ENCODE measurements at regions of chr12 and their contacts with region 1.

Region 1: GRCh38 chr12:51871126-51871525 is 16.8 kb upstream of the ANKRD33 start:
- DNase-seq: no peak
- H3K4me3 ChIP-seq: no peak overlapping the region
- CTCF ChIP-seq: no peak

Region 2: DNA sequence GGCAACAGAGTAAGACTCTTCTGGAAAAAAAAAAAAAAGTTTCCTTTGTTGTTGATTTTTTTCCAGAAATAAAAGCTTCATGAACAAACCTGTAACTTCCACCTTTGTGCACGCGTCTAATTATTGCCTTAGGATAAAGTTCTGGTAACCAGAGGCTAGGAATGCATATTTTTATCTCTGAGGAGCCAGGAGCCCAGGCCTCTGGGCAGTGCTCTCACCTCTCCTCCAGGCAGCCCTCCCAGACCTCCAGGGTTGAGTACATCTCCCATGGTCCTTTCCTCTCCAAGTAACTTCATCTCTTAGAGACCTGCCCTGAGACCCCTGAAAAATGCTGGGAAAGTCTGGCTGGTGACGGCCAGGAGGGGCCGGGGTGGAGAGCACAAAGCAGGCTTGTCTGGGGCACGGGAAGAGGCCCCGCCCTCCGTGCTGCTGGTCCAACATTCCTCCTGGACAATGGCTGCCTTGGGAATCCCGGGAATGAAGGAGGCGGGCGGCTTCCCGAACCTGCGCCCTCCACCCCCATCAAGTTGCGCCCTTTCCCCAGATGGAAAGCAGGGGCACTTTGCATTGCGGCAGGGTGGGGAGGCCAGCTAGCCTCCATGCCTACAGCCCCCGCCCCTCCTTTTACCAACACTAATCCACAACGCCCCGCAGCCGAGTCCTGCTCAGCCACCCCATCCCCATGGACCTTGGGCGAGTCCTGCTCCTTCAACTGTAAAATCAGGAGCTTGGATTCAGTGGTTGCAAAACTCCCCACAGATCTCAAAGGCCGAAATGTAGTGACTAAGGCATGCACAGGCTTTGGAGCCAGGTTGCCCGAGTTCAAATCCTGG is 15.3 kb before region 1 on chr12:
- CTCF ChIA-PET with region 1: interaction called, 73 read pairs
- POLR2A ChIA-PET with region 1: no interaction called
- DNase-seq: no peak
- H3K4me3 ChIP-seq: peak overlapping the region; percentile 42
- CTCF ChIP-seq: no peak

Region 3: DNA sequence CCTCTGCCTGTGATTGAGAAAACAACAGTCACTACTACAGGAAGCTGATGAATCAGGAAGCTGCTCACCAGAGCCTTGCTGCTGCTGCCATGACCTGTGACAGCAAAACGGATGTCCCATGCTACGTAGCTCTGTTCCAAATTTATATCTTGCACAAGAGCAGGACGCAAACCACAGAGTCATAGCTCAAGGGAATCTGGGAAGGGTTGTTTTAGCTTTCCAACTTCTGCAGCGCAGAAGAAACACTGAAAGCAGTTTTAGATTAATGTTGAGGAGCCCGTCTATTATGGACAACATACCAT is 14.8 kb after region 1 on chr12:
- CTCF ChIA-PET with region 1: interaction called, 54 read pairs
- POLR2A ChIA-PET with region 1: no interaction called
- DNase-seq: peak; percentile 88
- H3K4me3 ChIP-seq: no peak overlapping the region
- CTCF ChIP-seq: no peak

Measured in AG04449 (cell line).